ENCODE measurements at regions of chr12 and their contacts with region 1.

Region 1: GRCh38 chr12:15939111-15939510 is 28.0 kb downstream of the DERA start:
- DNase-seq: no peak
- ATAC-seq: no peak
- H3K4me3 ChIP-seq: no peak overlapping the region
- H3K27ac ChIP-seq: no peak overlapping the region
- H3K4me1 ChIP-seq: no peaks in the 10 kb centered on the region
- H3K27me3 ChIP-seq: no peaks in the 10 kb centered on the region
- CTCF ChIP-seq: no peak
- POLR2A ChIP-seq: no peak
- RAD21 ChIP-seq: no peak

Region 2: DNA sequence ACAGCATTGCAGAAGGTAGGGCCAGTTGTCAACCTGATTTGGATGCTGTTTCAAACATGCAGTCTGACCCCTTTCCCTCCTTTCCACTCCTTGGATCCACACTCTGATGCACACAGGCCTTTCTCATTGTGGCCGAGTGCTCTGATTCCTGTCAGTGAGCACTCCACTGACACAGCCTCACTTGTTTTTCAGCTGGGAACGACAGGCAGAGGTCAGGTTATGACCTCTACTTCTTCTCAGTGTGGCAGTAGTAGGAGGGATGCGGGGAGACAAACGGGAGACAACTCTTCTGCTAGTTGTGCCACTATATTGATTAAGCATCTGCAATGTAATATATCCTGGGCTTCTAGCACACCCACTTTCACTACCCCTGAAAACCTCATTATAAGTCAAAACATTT is 33.8 kb after region 1 on chr12:
- CTCF ChIA-PET with region 1: no interaction called
- POLR2A ChIA-PET with region 1: no interaction called
- dilution Hi-C with region 1: no loop called
- in situ Hi-C with region 1: loop called (anchors 5 kb)
- intact Hi-C with region 1: no loop called
- DNase-seq: no peak
- ATAC-seq: no peak
- H3K4me3 ChIP-seq: no peak overlapping the region
- H3K27ac ChIP-seq: no peak overlapping the region
- H3K4me1 ChIP-seq: peaks cover 5% of the 10 kb centered on the region
- H3K27me3 ChIP-seq: no peaks in the 10 kb centered on the region
- CTCF ChIP-seq: no peak
- POLR2A ChIP-seq: no peak
- RAD21 ChIP-seq: no peak

Region 3: GRCh38 chr12:15987696-15988095 is 48.6 kb after region 1 on chr12:
- CTCF ChIA-PET with region 1: no interaction called
- POLR2A ChIA-PET with region 1: interaction called, 12 read pairs
- dilution Hi-C with region 1: no loop called
- in situ Hi-C with region 1: no loop called
- intact Hi-C with region 1: no loop called
- DNase-seq: no peak
- ATAC-seq: no peak
- H3K4me3 ChIP-seq: no peak overlapping the region
- H3K27ac ChIP-seq: no peak overlapping the region
- H3K4me1 ChIP-seq: peaks cover 2% of the 10 kb centered on the region; the same call in 1 of the 2 replicates
- H3K27me3 ChIP-seq: no peaks in the 10 kb centered on the region
- CTCF ChIP-seq: no peak
- POLR2A ChIP-seq: no peak
- RAD21 ChIP-seq: no peak

Measured in IMR-90 (cell line).